Endothelial cell of umbilical vein (primary cell): ENCODE measurements at regions of chr12 and their contacts with region 1.

Region 1: DNA sequence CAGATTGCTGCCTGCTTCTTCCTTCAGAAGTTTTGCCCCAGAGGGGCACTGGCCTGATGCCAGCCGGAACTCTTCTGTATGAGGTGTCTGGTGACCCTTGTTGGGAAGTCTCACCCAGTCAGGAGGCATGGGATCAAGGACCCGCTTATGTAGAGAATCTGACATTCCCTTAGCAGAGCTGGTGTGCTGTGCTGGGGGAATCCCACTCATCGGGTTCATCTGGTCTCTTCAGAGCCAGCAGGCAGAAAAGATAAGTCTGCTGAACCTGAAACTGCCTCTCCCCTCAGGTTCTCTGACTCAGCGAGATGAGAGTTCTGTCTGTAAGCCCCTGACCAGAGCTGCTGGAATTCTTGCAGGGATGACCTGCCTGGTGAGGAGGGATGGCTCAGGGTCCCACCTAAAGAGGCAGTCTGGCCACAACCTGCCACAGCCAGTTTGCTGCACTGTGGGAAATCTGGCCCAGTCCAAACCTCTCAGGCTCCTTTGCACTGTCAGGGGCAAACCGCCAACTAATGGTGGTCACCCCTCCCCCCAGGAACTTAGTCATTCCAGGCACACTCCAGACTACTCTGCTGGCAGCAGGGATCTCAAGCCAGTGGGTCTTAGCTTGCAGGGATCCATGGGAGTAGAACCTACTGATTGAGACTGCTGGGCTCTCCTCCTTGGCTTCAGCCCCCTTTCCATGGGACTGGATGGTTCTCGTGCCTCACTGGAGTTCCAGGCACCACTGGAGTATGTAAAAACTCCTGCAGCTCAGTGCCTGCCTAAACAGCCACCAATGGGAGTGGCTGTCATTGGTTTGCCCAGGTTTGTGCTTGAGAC is 4.1 kb downstream of the CLEC2D start:
- DNase-seq: peak; percentile 94
- H3K4me3 ChIP-seq: no peak overlapping the region
- H3K27ac ChIP-seq: peak overlapping the region; percentile 19
- H3K4me1 ChIP-seq: peaks cover 14% of the 10 kb centered on the region
- H3K27me3 ChIP-seq: no peaks in the 10 kb centered on the region
- CTCF ChIP-seq: no peak
- POLR2A ChIP-seq: no peak

Region 2: GRCh38 chr12:9619411-9620179 is 54.0 kb before region 1 on chr12:
- CTCF ChIA-PET with region 1: no interaction called
- POLR2A ChIA-PET with region 1: no interaction called
- dilution Hi-C with region 1: no loop called
- intact Hi-C with region 1: no loop called
- DNase-seq: no peak
- H3K4me3 ChIP-seq: no peak overlapping the region
- H3K27ac ChIP-seq: no peak overlapping the region
- H3K4me1 ChIP-seq: no peaks in the 10 kb centered on the region
- H3K27me3 ChIP-seq: no peaks in the 10 kb centered on the region
- CTCF ChIP-seq: no peak
- POLR2A ChIP-seq: no peak

Region 3: DNA sequence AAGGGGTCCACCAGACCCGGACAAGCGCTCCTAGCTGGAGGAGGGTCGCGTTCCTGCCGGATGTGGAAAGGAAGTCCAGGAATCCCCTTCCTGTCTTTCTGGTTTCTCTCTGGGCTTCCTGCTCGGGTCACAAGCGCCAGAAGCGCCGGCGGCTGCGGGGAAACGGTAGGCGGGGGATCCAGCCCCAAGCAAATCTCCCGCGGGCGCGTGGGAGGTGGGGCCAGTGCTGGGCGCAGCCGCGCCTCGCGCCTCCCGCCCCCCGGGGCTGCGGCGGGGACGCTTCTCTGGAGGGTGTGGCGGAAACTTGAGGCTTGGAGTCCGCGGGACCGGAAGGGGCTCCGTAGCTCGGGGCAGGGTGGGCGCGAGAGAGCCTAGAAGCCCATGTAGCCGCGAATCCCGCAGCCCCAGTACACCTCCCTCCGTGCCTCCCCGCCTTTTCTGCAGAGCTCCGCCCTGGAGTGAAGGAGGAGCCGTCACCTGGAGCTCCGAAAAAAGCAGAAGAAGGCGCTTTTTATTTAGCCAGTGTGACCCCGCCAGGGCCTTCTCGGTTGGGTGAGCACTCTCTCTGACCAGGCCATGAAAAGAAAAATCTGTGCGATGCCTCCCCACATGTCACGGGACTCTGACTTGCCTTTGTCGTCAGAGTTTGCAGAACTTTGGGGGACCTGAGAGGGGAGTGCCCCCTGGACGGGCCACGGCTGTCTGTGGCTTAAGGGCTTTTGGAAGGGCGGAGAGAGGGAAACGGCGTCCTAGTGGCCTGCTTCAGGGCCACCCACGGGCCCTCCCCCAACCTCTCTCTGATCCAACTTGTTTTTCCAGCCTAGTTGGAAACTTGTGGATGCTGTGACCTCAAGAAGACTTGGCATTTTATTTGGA is 25.6 kb before region 1 on chr12:
- CTCF ChIA-PET with region 1: interaction called, 8 read pairs
- POLR2A ChIA-PET with region 1: no interaction called
- dilution Hi-C with region 1: no loop called
- intact Hi-C with region 1: loop called (anchors 1 kb)
- DNase-seq: peak; percentile 54
- H3K4me3 ChIP-seq: peak overlapping the region; percentile 57 to 91 (median 85)
- H3K27ac ChIP-seq: peak overlapping the region; percentile 72
- H3K4me1 ChIP-seq: peaks cover 40% of the 10 kb centered on the region
- H3K27me3 ChIP-seq: no peaks in the 10 kb centered on the region
- CTCF ChIP-seq: no peak
- POLR2A ChIP-seq: peak; percentile 50

Region 4: DNA sequence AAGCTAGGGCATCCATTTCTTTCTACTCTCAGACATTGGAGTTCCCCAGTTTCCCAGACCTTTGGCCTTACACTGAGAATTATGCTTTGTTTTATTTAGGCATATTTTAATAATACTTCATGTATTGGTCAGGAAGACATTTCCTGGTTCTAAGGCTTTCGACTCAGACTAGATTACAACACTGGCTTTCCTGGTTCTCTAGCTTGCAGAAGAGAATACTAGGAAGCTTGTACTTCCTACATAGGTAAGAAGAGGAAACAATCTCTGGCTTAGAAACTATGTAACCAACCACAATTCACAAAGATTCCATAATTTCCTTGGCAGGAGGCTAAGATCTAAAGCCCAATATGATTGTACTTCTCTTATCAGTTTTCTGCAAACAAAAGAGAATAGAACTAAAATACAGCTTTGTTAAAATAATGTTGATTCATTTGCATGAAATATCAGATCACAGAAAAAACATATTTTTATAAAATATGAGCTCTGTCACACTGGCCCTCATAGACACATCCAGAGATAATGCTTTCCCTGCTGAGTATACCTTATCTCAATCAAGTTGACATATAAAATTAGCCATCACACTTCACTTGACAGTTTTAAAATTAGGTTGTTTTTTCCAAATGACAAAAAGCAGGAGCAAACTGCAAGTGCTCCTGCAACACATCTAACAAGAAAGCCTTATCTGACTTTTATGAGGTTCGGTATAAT is 26.4 kb after region 1 on chr12:
- CTCF ChIA-PET with region 1: no interaction called
- POLR2A ChIA-PET with region 1: no interaction called
- dilution Hi-C with region 1: no loop called
- intact Hi-C with region 1: loop called (anchors 2 kb)
- DNase-seq: peak; percentile 86
- H3K4me3 ChIP-seq: no peak overlapping the region
- H3K27ac ChIP-seq: peak overlapping the region; percentile 22
- H3K4me1 ChIP-seq: peaks cover 17% of the 10 kb centered on the region
- H3K27me3 ChIP-seq: no peaks in the 10 kb centered on the region
- CTCF ChIP-seq: no peak
- POLR2A ChIP-seq: no peak

Region 5: GRCh38 chr12:9883175-9883574 is 209.6 kb after region 1 on chr12:
- CTCF ChIA-PET with region 1: no interaction called
- POLR2A ChIA-PET with region 1: no interaction called
- dilution Hi-C with region 1: no loop called
- intact Hi-C with region 1: no loop called
- DNase-seq: no peak
- H3K4me3 ChIP-seq: no peak overlapping the region
- H3K27ac ChIP-seq: no peak overlapping the region
- H3K4me1 ChIP-seq: no peaks in the 10 kb centered on the region
- H3K27me3 ChIP-seq: no peaks in the 10 kb centered on the region
- CTCF ChIP-seq: no peak
- POLR2A ChIP-seq: no peak